PC-9 (cell line): ENCODE measurements at regions of chr13 and their contacts with region 1.

Region 1: DNA sequence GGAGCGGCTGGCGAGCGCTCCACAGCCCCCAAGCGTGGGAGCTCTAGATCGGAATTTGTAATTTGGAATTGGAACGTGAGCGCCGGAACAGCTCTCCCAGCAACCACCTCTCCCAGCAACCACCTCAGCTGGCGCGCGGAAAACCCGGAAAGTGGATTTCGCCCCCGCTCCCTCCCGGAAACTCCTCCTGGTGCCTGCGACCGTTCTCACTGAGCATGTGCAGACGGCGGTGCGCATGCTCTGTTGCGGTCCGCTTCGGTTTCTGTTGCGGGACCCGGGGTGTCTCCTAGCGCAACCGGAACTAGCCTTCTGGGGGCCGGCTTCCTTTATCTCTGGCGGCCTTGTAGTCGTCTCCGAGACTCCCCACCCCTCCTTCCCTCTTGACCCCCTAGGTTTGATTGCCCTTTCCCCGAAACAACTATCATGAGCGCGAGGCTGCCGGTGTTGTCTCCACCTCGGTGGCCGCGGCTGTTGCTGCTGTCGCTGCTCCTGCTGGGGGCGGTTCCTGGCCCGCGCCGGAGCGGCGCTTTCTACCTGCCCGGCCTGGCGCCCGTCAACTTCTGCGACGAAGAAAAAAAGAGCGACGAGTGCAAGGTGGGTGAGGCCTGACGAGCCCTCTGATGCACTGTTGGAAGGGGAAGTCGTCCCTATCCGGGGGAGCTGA is at the start of gene TM9SF2:
- DNase-seq: peak; percentile 94 to 98
- H3K4me3 ChIP-seq: peak within 1 kb of the TSS; percentile 79
- H3K27ac ChIP-seq: peak within 1 kb of the TSS; percentile 72
- H3K4me1 ChIP-seq: peaks cover 66% of the 10 kb centered on the region
- H3K27me3 ChIP-seq: no peaks in the 10 kb centered on the region
- CTCF ChIP-seq: no peak
- total RNA-seq, gene TM9SF2: 66.5 and 87.0 TPM in 2 replicates

Region 2: DNA sequence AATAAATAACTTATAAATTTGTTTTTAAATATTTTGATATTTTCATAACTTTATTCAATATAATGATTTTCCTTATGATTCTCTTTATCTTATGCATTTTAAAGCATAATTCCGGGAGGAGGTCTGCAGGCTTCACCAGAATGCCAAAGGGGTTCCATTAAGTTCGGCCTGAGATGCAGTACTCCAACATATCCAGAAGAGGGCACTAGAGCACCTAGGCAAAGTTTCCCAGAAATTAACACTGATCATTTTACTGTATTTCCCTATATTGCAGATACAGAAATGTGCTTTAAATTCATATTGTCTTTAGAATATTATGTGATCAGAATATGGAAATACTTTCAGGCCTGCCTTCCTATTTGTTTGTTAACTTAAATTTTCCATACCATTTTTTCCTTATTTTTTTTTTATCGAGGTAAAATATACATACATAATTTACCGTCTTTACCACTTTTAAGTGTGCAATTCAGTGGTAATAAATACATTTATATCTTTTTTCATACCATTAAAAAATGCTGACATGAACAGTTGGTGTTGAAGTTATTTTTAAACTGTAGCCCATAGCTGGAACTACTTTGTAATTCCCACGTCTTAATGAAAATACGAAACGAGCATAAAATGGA is 58.9 kb before region 1 on chr13:
- CTCF ChIA-PET with region 1: interaction called, 9 read pairs
- POLR2A ChIA-PET with region 1: no interaction called
- intact Hi-C with region 1: loop called (anchors 2 kb)
- DNase-seq: peak; percentile 42 to 49
- H3K4me3 ChIP-seq: no peak overlapping the region
- H3K27ac ChIP-seq: no peak overlapping the region
- H3K4me1 ChIP-seq: peaks cover 19% of the 10 kb centered on the region
- H3K27me3 ChIP-seq: no peaks in the 10 kb centered on the region
- CTCF ChIP-seq: peak; percentile 96